Panc1 (cell line): ENCODE measurements at regions of chr14 and their contacts with region 1.

Region 1: DNA sequence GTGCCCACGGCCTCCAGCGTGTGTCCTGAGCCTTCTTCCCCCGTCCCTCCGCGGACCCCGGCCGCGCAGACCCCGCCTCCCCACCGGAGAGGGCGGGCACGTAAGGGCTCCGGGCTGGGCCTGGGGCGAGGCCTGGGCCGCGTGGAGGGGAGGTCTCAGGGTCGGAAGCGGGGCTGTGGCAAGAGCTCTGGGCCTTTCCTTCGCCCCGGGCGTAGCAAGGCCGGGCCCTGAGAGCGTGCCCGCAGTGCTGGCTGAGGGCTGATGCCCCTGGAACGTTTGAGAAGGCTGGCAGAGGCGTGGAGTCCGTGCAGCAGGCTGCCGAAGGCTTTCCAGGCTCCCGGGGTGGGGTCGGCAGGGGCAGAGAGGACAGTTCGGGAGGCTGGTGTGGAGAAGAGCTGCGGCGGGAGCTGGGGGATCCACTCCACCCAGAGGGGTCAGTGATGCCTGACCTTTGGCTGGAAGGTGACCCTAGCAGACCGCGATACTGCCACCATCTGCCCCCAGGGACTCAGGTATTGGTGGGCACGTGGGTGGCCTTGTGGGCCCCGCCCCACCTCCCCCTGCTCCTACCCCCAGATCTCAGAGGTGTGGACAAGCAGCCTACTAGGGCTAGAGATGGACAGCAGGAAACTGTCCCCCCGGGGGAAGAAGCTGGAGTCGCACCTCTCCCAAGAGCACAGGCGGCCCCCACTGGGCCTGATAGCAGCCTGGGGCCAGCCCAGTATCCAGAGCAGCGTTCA is 558 bp downstream of the TEX22 start:
- DNase-seq: no peak
- ATAC-seq: peak; percentile 54
- H3K4me3 ChIP-seq: peak overlapping the region; percentile 65 to 66
- H3K27ac ChIP-seq: peak overlapping the region; percentile 74
- H3K4me1 ChIP-seq: peaks cover 3% of the 10 kb centered on the region; the same call in 1 of the 2 replicates
- H3K27me3 ChIP-seq: no peaks in the 10 kb centered on the region
- CTCF ChIP-seq: no peak

Region 2: GRCh38 chr14:105473677-105474482 is 75.0 kb after region 1 on chr14:
- CTCF ChIA-PET with region 1: interaction called, 12 read pairs
- POLR2A ChIA-PET with region 1: no interaction called
- in situ Hi-C with region 1: no loop called
- intact Hi-C with region 1: no loop called
- DNase-seq: no peak
- ATAC-seq: peak; percentile 67
- H3K4me3 ChIP-seq: peak overlapping the region; percentile 49 to 65
- H3K27ac ChIP-seq: peak overlapping the region; percentile 81
- H3K4me1 ChIP-seq: peaks cover 37% of the 10 kb centered on the region
- H3K27me3 ChIP-seq: no peaks in the 10 kb centered on the region
- CTCF ChIP-seq: no peak

Region 3: DNA sequence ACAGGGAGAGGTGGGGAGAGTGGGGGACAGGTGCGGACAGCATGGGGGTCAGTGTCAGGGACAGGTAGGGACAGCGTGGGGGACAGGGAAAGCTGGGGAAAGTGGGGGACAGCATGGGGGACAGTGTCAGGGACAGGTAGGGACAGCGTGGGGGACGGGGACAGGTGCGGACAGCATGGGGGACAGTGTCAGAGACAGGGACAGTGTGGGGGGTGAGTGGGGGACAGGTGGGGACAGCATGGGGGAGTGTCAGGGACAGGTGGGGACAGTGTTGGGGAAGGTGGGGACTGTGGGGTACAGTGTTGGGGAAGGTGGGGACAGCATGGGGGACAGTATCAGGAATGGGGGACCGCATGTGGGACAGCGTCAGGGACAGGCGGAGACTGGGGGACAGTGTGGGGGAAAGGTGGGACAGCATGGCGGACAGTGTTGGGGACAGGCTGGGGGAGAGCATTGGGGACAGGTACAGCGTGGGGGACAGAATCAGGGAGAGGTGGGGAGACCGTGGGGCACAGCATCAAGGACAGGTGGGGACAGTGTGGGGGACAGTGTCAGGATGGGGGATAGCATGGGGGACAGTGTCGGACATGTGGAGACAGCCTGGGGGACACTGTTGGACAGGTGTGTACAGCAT is 223.5 kb after region 1 on chr14:
- CTCF ChIA-PET with region 1: no interaction called
- POLR2A ChIA-PET with region 1: no interaction called
- in situ Hi-C with region 1: no loop called
- intact Hi-C with region 1: no loop called
- DNase-seq: no peak
- ATAC-seq: no peak
- H3K4me3 ChIP-seq: no peak overlapping the region
- H3K27ac ChIP-seq: no peak overlapping the region
- H3K4me1 ChIP-seq: no peaks in the 10 kb centered on the region
- H3K27me3 ChIP-seq: no peaks in the 10 kb centered on the region
- CTCF ChIP-seq: no peak